ENCODE measurements at regions of chr4 and their contacts with region 1.

Region 1: DNA sequence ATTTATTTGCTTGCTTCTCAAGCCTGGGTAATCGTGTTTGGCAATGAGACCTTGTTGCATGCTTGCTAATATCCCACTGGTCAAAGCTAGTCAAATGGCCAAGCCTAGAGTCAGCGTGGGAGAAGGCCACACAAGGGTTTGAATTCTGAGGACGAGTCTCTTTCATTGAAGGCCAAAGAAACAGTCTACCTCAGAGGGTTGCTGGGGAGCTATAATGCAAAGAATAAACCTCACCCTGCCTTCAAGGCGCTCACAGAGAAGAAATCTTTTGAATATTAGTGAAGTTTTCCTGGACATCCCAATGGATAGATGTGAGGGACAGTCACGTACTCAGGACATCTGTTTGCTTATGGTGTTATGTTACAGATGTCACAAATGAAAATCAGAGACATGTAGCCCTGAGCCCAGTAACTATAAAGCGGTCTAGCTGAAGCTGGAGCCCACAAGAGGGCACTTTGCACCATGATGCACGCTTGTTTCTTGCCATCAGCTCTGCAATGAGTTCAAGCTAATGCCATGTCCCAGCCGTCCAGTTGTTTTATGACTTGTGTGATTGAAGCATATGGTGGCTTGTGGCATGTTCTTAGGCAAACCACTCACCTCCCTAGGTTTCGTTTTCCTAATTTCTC is 1.1 kb upstream of the TLR3 start:
- DNase-seq: peak; percentile 27

Region 2: DNA sequence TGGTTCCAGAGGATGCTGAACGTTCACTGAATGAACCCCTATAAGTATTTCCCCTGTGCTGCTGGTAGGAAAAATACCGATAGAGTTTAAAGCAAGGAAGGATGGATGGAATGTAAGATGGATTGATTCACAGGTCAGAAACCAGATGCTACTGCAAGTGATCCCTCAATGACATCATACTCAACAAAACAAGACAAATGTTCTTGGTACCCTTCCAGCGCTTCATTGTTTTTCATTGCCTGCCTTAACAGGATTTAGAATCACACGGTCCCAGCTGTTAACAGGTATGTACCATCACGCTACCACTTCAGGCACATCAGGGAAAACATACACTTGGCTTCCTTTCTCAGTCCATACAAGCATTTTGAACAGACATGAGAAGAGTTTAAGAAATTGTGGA is 117.0 kb before region 1 on chr4:
- CTCF ChIA-PET with region 1: no interaction called
- POLR2A ChIA-PET with region 1: no interaction called
- DNase-seq: no peak

Region 3: DNA sequence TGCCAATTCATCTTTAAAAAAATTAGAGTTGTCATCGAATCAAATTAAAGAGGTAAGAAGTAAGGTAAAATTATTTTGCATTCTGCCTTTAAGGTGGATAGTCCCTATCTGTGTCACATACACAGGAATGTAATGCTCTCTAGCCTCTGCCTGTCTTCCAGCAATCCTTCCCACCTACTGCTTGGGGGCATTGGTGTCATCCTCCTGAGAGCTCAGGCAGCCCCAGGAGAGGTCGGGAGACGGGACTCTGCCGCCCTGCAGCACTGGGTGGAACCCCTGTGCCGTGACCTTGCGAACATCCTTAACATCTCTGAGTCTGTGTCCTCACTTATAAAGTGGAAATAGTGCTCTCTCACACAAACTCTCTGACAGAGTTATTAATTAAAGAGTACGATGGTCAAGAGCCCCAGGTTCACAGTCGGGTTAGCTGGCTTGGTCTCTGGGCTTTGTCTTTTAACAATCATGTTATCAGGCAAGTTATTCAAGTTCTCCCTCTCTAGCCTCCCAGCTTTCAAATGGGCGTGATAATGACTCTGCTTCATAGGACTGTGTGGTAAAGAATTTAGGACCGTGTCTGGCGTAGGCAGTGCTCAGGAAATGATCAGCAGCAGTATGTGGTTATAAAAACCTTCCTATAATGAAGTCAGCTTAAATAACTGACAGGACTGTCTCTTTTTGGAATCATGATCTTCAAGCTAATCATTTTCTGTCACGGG is 11.3 kb after region 1 on chr4:
- CTCF ChIA-PET with region 1: interaction called, 16 read pairs
- POLR2A ChIA-PET with region 1: interaction called, 3 read pairs
- DNase-seq: no peak

Region 4: DNA sequence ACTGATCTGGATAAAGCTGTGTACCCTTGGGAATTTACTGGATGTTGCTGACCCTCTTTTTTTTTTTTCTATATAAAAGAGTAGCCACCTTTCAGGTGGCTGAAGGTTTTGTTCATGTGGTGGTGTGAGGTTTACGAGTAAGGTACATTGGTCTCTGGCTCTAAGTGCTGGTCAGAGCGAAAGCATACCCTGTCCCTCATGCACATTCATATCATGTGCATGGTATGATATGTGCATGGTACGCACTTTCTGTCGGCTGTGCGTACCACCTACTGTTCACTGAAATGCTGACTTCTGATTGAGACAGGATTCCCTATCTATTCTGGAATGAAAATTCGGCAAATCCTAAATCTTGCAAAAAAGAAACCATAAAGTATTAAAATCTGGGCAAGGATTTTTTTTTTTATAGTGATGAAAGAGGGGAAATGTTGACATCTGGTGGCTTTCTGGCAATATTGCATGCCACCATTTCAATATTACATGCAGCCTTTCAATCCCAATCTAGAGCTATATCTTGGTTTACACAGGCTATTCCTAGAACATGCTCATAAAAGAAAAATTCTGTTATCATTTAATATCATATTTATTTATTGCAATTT is 69.4 kb after region 1 on chr4:
- CTCF ChIA-PET with region 1: interaction called, 63 read pairs
- POLR2A ChIA-PET with region 1: interaction called, 6 read pairs
- DNase-seq: peak; percentile 14

Region 5: GRCh38 chr4:186335793-186336192 is 267.9 kb after region 1 on chr4:
- CTCF ChIA-PET with region 1: no interaction called
- POLR2A ChIA-PET with region 1: no interaction called
- DNase-seq: no peak

Region 6: DNA sequence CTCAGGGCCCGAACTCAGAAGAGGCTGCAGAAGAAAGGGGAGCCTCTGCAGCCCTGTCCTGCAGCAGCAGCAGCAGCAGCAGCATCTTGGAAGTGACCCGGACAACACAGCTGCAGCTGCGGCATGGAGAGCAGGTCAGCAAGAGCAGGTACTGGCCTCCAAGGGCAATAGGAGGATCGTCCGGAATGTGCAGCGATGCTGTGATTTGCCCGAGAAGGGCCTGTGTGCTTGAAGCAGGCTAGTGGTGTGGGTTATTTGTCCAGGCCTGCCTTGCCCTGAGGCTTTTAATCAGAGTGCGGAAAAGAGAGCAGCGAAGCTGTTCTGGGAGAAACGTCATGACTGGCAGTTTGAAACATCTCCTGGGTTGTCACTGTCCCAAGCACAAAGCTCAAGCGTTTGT is 324.2 kb after region 1 on chr4:
- CTCF ChIA-PET with region 1: no interaction called
- POLR2A ChIA-PET with region 1: no interaction called
- DNase-seq: no peak

Region 7: GRCh38 chr4:187141101-187141500 is 1073.2 kb after region 1 on chr4:
- CTCF ChIA-PET with region 1: no interaction called
- POLR2A ChIA-PET with region 1: no interaction called
- DNase-seq: no peak

Measured in HEK293T (cell line).